Activated CD4-positive, alpha-beta T cell treated with anti-CD3 and anti-CD28 coated beads, Interleukin-2, amount 10 ng/mL, durations not matched to agents 24 days and 14 days (primary cell): ENCODE measurements at regions of chr5 and their contacts with region 1.

Region 1: DNA sequence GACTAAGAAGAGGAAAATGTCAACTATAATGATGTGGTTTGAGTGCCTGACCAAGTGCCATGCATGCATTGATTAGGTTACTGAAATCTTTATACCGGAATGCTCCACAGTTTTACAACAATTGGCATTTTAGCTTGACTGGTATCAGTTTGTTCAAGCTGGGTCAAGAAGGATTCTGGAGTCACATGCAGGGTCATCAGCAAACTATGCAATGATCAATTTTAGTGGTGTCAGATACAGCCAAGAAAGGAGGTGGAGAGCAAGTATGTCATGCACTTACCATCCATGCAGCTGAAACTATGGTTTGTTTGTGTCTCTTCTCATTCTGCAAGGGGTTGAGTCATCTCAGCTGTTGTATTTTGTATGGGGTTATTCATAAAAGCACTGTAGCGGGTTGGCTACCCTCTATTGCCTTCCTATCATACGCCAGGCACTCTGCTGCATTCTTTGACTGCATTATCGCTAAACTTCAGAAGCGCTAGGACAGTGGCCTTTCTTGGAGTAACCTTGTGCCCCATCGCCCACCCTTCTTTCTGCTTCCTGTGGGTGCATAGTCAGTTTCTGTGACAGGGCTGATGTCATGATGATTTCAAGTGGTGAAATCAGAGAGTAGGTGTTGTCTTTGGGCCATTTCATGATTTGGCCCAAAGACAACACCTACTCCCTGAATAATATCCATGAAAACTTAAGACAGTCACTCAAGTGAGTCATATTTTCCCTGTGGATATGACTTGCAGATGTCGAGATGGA is 145.4 kb downstream of the MTX3 start:
- DNase-seq: peak; percentile 75
- H3K4me3 Mint-ChIP-seq: peak overlapping the region; percentile 9
- H3K27ac Mint-ChIP-seq: peak overlapping the region; percentile 75
- H3K4me1 Mint-ChIP-seq: peaks cover 21% of the 10 kb centered on the region
- H3K27me3 Mint-ChIP-seq: peaks cover under 1% of the 10 kb centered on the region

Region 2: GRCh38 chr5:79736528-79737514 is 108.8 kb before region 1 on chr5:
- intact Hi-C with region 1: loop called (anchors 2 kb)
- DNase-seq: peak; percentile 78
- H3K4me3 Mint-ChIP-seq: peak overlapping the region; percentile 62
- H3K27ac Mint-ChIP-seq: peak overlapping the region; percentile 41
- H3K4me1 Mint-ChIP-seq: peaks cover 38% of the 10 kb centered on the region
- H3K27me3 Mint-ChIP-seq: peaks cover 63% of the 10 kb centered on the region